PC-3 (cell line): ENCODE measurements at regions of chr2 and their contacts with region 1.

Region 1: GRCh38 chr2:74602586-74603281 is 45.4 kb downstream of the M1AP start:
- DNase-seq: peak; percentile 69
- ATAC-seq: peak; percentile 97
- H3K4me3 ChIP-seq: no peak overlapping the region
- H3K27ac ChIP-seq: no peak overlapping the region
- H3K4me1 ChIP-seq: peaks cover 8% of the 10 kb centered on the region
- H3K27me3 ChIP-seq: peaks cover 8% of the 10 kb centered on the region; the same call in 1 of the 2 replicates
- CTCF ChIP-seq: no peak

Region 2: DNA sequence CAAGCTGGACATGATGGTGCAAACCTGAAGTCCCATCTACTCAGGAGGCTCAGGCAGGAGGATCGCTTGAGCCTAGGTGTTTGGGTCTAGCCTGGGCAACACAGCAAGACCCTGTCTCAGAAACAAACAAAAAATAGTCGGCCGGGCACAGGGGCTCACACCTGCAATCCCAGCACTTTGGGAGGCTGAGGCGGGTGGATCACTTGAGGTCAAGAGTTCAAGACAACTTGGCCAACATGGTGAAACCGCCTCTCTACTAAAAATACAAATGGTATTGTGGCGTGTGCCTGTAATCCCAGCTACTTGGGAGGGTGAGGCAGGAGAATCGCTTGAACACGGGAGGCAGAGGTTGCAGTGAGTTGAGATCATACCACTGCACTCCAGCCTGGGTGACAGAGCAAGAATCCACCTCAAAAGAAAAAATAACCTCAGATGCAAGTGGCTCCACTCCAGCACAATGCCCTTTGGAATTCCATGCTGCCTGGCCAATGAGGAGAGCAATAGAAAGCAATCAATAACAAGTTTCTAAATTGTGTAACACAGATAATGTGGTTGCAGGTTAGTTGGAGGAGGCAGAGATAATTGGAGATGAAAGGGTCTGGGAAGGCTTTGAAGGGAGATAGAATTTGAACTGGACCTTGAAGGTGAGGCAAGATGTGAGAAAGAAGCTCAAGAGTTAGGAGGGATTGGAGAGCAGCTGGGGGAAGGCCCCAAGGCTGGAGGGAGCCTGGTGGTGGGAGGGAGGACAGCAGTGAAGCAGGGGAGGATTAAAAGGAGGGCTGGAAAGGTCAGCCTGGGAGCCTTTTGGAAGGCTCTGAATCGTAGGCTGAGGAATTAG is 113.9 kb before region 1 on chr2:
- CTCF ChIA-PET with region 1: no interaction called
- POLR2A ChIA-PET with region 1: no interaction called
- intact Hi-C with region 1: no loop called
- DNase-seq: no peak
- ATAC-seq: no peak
- H3K4me3 ChIP-seq: no peak overlapping the region
- H3K27ac ChIP-seq: no peak overlapping the region
- H3K4me1 ChIP-seq: peaks cover 11% of the 10 kb centered on the region
- H3K27me3 ChIP-seq: no peaks in the 10 kb centered on the region
- CTCF ChIP-seq: no peak

Region 3: DNA sequence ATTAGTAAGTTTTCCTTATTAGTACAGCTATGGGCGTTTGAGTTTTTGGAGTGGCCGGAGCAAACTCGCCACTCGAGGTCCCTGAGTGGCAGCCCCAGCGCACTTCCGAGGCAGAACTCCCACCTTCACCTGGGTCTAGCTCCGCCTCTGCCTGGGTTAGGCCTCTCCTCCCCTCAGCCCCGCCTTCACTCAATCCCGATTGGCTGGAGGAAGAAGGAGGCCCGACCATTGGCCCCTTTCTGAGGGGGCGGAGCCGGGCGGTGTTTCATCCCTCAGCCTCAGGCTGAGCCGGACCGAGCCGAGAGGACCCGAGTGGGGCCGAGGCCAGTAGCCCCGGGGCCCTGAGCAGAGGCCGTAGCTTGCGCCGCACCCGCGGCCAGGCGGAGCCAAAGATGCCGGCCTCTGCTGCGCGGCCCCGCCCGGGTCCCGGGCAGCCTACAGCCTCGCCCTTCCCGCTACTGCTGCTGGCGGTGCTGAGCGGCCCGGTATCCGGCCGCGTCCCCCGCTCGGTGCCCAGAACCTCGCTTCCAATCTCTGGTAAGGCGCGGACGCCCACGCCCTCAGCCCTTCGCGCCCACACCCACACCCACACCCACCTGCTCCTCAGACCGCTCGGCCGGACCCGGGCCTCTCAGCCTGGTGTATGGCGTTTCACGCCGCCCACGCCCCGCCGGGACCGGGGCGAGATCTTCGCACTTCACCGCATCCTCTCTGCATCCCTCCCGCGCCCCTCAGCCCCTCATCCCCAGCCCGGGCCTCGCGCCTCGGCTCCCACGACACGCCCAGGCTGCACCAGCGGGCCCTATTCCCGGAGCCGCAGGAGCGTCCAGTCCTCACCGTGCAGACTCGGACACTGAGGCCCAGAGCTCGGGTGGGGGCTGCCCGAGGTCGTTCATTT is 51.5 kb after region 1 on chr2 and contains the start of gene SEMA4F:
- CTCF ChIA-PET with region 1: no interaction called
- POLR2A ChIA-PET with region 1: interaction called, 6 read pairs
- intact Hi-C with region 1: loop called (anchors 10 kb)
- DNase-seq: peak; percentile 98
- ATAC-seq: peak; percentile 99
- H3K4me3 ChIP-seq: peak within 1 kb of the TSS; percentile 82
- H3K27ac ChIP-seq: no peak within 1 kb of the TSS
- H3K4me1 ChIP-seq: peaks cover 7% of the 10 kb centered on the region
- H3K27me3 ChIP-seq: no peaks in the 10 kb centered on the region
- CTCF ChIP-seq: no peak
- total RNA-seq, gene SEMA4F: 7.6 and 13.9 TPM in 2 replicates